PC-3 (cell line): ENCODE measurements at regions of chrX and their contacts with region 1.

Region 1: GRCh38 chrX:120452131-120452530 is 17.0 kb downstream of the LAMP2 start:
- DNase-seq: peak; percentile 36
- ATAC-seq: no peak
- H3K4me3 ChIP-seq: no peak overlapping the region
- H3K27ac ChIP-seq: no peak overlapping the region
- H3K4me1 ChIP-seq: peaks cover 19% of the 10 kb centered on the region
- H3K27me3 ChIP-seq: no peaks in the 10 kb centered on the region
- CTCF ChIP-seq: peak; percentile 51; the same call in 1 of the 2 replicates

Region 2: GRCh38 chrX:120250522-120251271 is 201.4 kb before region 1 on chrX and contains the start of gene ZBTB33:
- CTCF ChIA-PET with region 1: no interaction called
- POLR2A ChIA-PET with region 1: no interaction called
- intact Hi-C with region 1: loop called (anchors 5 kb)
- DNase-seq: peak; percentile 96
- ATAC-seq: peak; percentile 98
- H3K4me3 ChIP-seq: peak within 1 kb of the TSS; percentile 96
- H3K27ac ChIP-seq: peak within 1 kb of the TSS; percentile 65
- H3K4me1 ChIP-seq: peaks cover 8% of the 10 kb centered on the region
- H3K27me3 ChIP-seq: no peaks in the 10 kb centered on the region
- CTCF ChIP-seq: peak; percentile 67
- total RNA-seq, gene ZBTB33: 12.1 and 14.3 TPM in 2 replicates

Region 3: GRCh38 chrX:120299928-120300327 is 152.2 kb before region 1 on chrX:
- CTCF ChIA-PET with region 1: no interaction called
- POLR2A ChIA-PET with region 1: no interaction called
- intact Hi-C with region 1: no loop called
- DNase-seq: peak; percentile 6
- ATAC-seq: peak; percentile 37; the same call in 1 of the 2 replicates
- H3K4me3 ChIP-seq: no peak overlapping the region
- H3K27ac ChIP-seq: no peak overlapping the region
- H3K4me1 ChIP-seq: no peaks in the 10 kb centered on the region
- H3K27me3 ChIP-seq: no peaks in the 10 kb centered on the region
- CTCF ChIP-seq: peak; percentile 41

Region 4: DNA sequence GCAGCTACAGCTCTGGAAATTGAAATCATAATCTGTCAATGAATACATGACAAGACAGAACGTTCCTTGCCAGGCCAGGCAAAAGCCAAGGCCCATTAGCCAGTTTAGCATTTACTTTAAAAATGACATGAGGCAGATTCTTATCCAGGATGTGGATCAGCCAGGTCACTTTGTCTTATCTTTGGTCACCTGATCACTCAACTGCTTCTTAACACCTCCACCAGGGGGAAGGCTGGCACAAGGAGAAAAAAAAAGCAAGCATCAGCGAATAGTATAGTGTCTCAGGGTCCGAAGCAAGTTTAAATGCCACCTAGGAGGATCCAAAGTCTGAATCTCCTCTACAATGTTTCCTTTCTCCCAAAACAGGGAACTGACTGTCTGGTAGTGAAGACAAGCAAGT is 71.4 kb before region 1 on chrX:
- CTCF ChIA-PET with region 1: interaction called, 3 read pairs
- POLR2A ChIA-PET with region 1: no interaction called
- intact Hi-C with region 1: loop called (anchors 1 kb)
- DNase-seq: peak; percentile 41
- ATAC-seq: peak; percentile 50
- H3K4me3 ChIP-seq: no peak overlapping the region
- H3K27ac ChIP-seq: no peak overlapping the region
- H3K4me1 ChIP-seq: no peaks in the 10 kb centered on the region
- H3K27me3 ChIP-seq: no peaks in the 10 kb centered on the region
- CTCF ChIP-seq: peak; percentile 62

Region 5: DNA sequence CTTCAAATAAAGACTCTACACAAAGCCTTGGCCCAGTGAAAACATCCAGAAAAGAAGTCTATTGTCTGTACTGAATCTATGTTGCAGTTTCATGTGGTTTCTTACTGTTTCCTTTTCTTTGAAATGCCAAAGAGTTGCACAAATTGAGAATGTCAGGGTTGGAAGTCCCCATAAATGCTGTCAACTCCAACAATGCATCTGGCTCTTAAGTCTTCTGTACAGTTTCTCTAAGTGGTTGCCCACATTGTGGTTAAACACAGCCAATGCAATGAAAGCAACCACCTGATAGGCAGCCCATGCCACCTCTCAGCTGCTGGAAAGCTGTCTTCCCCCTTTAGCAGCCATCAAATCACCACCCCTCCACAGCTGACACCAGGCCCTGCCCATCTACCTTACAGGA is 244.9 kb after region 1 on chrX:
- CTCF ChIA-PET with region 1: no interaction called
- POLR2A ChIA-PET with region 1: no interaction called
- intact Hi-C with region 1: no loop called
- DNase-seq: no peak
- ATAC-seq: no peak
- H3K4me3 ChIP-seq: no peak overlapping the region
- H3K27ac ChIP-seq: no peak overlapping the region
- H3K4me1 ChIP-seq: no peaks in the 10 kb centered on the region
- H3K27me3 ChIP-seq: no peaks in the 10 kb centered on the region
- CTCF ChIP-seq: no peak